ENCODE measurements at regions of chr5 and their contacts with region 1.

Region 1: DNA sequence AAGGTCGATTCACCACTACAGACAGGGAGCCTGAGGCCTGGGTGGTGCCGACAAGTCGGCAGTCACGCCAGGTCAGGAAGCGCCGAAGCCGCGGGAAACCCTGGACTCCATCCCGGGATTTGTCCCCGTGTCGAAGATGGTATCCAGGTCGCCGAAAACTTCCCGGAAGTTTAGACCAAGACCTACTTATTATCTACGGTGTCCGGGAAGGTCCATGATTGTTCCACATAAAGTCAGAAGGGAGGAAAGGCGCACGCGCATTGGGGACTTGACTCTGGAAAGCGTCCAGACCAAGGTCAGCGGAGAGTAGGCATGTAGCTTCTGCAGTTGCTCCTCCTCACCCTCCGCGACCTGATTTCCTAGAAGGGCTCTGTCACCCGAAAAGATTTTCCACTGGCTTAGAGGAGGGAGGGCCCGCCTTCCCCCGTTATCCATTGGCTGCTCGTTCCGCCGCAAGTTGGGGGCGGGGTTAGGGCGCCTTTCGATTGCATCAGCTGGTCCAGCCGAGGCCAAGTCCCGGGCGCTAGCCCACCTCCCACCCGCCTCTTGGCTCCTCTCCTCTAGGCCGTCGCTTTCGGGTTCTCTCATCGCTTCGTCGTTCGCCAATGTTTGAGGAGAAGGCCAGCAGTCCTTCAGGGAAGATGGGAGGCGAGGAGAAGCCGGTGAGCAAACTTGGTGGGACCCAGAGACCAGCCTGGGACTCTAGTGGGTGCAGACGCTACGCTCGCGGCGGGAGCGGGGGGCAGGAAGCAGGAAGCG is at the start of gene TARS1:
- DNase-seq: peak; percentile 99 to 100
- ATAC-seq: peak; percentile 96 to 98
- H3K4me3 ChIP-seq: peak within 1 kb of the TSS; percentile 70 to 97 (median 91)
- H3K27ac ChIP-seq: peak within 1 kb of the TSS; percentile 85 to 98 (median 96)
- H3K4me1 ChIP-seq: peaks cover 27 to 34% of the 10 kb centered on the region in 2 donors
- H3K27me3 ChIP-seq: no peaks in the 10 kb centered on the region
- CTCF ChIP-seq: peak in 1 of 5 experiments; percentile 21
- POLR2A ChIP-seq: peak; percentile 83 to 88
- total RNA-seq, gene TARS1: 62.8 to 77.6 (median 69.8) TPM

Region 2: GRCh38 chr5:32174011-32174870 is 1266.4 kb before region 1 on chr5 and contains the start of gene GOLPH3:
- in situ Hi-C with region 1: no loop called
- intact Hi-C with region 1: loop called (anchors 5 kb)
- DNase-seq: peak; percentile 86 to 87
- ATAC-seq: peak; percentile 82 to 83
- H3K4me3 ChIP-seq: peak within 1 kb of the TSS; percentile 73 to 99 (median 82)
- H3K27ac ChIP-seq: peak within 1 kb of the TSS; percentile 94 to 100 (median 97)
- H3K4me1 ChIP-seq: peaks cover 19 to 39% of the 10 kb centered on the region in 2 donors
- H3K27me3 ChIP-seq: no peaks in the 10 kb centered on the region
- CTCF ChIP-seq: peak in 2 of 5 experiments; percentile 33 to 36
- POLR2A ChIP-seq: peak; percentile 91
- total RNA-seq, gene GOLPH3: 34.9 to 77.8 (median 46.1) TPM

Region 3: GRCh38 chr5:32444431-32445286 is 996.0 kb before region 1 on chr5 and contains the start of gene ZFR:
- in situ Hi-C with region 1: no loop called
- intact Hi-C with region 1: loop called (anchors 5 kb)
- DNase-seq: peak; percentile 88 to 92
- ATAC-seq: peak; percentile 90 to 94
- H3K4me3 ChIP-seq: peak within 1 kb of the TSS; percentile 68 to 88 (median 76)
- H3K27ac ChIP-seq: peak within 1 kb of the TSS; percentile 89 to 97 (median 92)
- H3K4me1 ChIP-seq: peaks cover 26 to 34% of the 10 kb centered on the region in 2 donors
- H3K27me3 ChIP-seq: no peaks in the 10 kb centered on the region
- CTCF ChIP-seq: no peak
- POLR2A ChIP-seq: peak; percentile 85 to 86
- total RNA-seq, gene ZFR: 84.0 to 109 (median 89.4) TPM

Region 4: DNA sequence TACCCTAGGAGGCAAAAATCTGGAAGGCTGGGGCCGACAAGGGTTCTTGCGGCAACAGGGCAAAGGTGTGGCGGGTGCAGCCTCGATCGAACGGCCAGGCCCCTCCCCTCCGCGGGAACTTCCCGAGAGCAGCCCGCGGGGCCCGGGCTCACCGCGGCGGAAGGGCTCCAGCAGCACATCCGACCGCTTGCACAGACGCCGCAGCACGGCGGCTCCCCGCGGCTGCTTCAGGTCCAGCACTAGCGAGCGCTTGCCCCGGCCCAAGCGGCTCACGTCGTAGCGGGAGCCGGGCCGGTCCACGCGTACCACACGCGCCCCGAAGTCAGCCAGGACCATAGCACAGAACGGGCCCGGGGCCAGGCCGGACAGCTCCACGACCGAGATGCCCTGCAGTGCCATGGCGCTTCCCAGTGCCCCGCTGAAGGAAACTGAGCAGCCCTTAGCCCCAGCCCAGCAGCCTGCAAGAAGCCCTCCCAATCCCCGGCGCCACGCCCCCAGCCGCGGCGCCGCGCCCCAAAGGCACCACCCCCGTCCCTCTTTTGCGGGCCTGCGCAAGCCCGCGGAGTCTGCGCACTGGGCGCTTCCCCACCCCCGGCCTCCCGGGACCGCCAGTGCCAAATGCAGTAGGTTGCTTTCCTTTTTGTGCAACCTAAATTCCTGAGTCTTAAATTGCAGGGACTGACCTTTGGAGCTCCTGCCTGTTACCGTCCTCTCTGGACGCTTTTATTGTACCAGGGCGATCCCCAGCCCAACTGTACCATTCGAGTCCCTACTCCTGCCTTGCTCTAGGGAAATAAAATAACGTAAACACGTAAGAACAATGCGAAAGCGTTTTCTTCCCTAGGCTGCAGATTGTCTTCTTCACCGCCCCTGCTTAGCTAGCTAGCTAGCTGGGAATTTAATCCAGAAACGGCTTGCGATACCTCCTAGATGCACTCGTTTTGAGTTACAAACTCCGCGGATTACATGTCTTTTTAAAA is 567.2 kb after region 1 on chr5 and contains the start of gene AMACR:
- in situ Hi-C with region 1: no loop called
- intact Hi-C with region 1: loop called (anchors 1 kb)
- DNase-seq: peak; percentile 87 to 93
- ATAC-seq: peak; percentile 96 to 97
- H3K4me3 ChIP-seq: peak within 1 kb of the TSS; percentile 58 to 82 (median 67)
- H3K27ac ChIP-seq: peak within 1 kb of the TSS; percentile 83 to 95 (median 87)
- H3K4me1 ChIP-seq: peaks cover 6 to 14% of the 10 kb centered on the region in 2 donors
- H3K27me3 ChIP-seq: no peaks in the 10 kb centered on the region
- CTCF ChIP-seq: peak in 2 of 5 experiments; percentile 10 to 16
- POLR2A ChIP-seq: peak; percentile 58 to 84
- total RNA-seq, gene AMACR: 2.5 to 15.3 (median 3.1) TPM